ENCODE measurements at regions of chr10 and their contacts with region 1.

Region 1: DNA sequence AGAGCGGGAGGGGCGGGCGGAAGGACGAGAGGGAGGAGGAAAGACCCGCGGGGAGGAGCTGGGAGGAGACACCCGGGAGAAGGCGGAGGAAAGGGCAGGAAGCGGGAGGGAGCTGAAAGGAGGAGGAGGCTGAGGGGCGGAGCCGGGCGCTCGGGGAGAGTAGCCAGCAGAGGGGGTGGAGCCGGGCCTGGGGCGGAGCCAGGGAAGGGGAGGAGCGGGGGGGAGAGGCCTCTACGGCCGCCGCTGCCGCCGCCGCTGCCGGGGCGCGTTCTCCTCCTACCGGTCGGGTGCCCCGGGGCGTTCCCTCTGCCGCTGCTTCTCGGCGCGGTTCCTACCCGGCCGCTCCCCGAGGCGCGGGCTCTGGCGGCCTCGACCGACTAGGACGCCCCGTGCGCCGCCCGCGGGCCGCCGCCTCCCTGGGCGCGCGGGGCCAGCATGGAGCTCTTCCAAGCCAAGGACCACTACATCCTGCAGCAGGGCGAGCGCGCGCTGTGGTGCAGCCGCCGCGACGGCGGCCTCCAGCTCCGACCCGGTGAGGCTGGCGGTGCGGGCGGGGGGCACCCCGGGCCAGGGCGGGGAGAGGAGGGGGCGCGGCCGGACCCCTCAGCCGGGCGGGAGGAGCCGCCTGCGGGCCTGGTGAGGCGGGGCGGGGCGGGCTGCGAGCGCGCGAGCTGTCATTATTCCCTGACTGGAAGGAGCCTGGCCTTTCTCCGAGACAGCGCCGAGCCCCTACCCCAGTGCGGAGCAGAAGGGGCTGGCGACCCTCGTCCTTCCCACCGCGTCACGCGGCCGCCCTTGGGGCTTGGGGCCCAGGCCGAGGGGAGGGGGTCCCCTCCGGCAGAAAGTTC is at the start of gene INPP5F:
- DNase-seq: peak; percentile 89
- ATAC-seq: peak; percentile 95
- H3K4me3 ChIP-seq: peak within 1 kb of the TSS; percentile 71 to 74
- H3K27ac ChIP-seq: peak within 1 kb of the TSS; percentile 96
- H3K4me1 ChIP-seq: peaks cover 37% of the 10 kb centered on the region
- H3K27me3 ChIP-seq: no peaks in the 10 kb centered on the region
- CTCF ChIP-seq: no peak; the same call in 1 of the 2 replicates
- total RNA-seq, gene INPP5F: 26.7 TPM

Region 2: GRCh38 chr10:119588071-119588470 is 138.0 kb before region 1 on chr10:
- CTCF ChIA-PET with region 1: no interaction called
- POLR2A ChIA-PET with region 1: no interaction called
- in situ Hi-C with region 1: no loop called
- intact Hi-C with region 1: no loop called
- DNase-seq: no peak
- ATAC-seq: no peak
- H3K4me3 ChIP-seq: no peak overlapping the region
- H3K27ac ChIP-seq: no peak overlapping the region
- H3K4me1 ChIP-seq: peaks cover 17% of the 10 kb centered on the region
- H3K27me3 ChIP-seq: no peaks in the 10 kb centered on the region
- CTCF ChIP-seq: no peak

Region 3: GRCh38 chr10:119686439-119687191 is 39.4 kb before region 1 on chr10:
- CTCF ChIA-PET with region 1: interaction called, 13 read pairs
- POLR2A ChIA-PET with region 1: interaction called, 5 read pairs
- in situ Hi-C with region 1: no loop called
- intact Hi-C with region 1: no loop called
- DNase-seq: no peak
- ATAC-seq: peak; percentile 93
- H3K4me3 ChIP-seq: peak overlapping the region; percentile 40 to 63
- H3K27ac ChIP-seq: peak overlapping the region; percentile 75
- H3K4me1 ChIP-seq: peaks cover 23% of the 10 kb centered on the region
- H3K27me3 ChIP-seq: no peaks in the 10 kb centered on the region
- CTCF ChIP-seq: peak; percentile 99